ENCODE measurements at regions of chr7 and their contacts with region 1.

Region 1: DNA sequence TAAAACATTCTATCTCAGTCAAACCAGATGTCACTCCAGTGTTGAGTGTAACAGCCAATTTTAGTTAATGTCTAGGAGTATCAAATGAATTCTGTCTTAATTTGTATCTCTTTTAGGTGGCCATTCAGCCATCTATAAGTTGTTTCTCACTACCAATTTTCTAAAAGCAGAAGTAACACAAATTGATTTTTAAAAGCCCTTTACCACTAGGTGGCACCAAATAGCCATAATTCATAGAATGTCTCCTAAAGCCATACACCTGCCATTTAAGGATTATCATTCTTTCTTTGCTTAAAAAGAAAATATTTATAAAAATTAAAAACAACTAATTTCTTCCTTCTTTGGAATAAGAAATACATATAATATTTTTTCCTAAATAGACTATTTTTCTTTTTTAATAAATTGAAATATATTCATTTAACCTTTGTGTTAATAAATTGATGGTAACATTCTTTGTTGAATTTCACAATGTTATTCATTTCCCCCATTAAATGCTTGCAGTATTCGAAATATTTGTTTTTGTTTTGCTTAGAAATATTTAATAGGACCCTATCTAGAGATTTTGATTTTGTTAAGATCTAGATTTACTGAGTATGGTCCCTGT is 107.8 kb upstream of the PPP1R3A start:
- DNase-seq: peak; percentile 75
- ATAC-seq: no peak
- H3K4me3 ChIP-seq: no peak overlapping the region
- H3K4me3 Mint-ChIP-seq: no peak overlapping the region
- H3K27ac ChIP-seq: no peak overlapping the region
- H3K27ac Mint-ChIP-seq: no peak overlapping the region
- H3K4me1 ChIP-seq: no peaks in the 10 kb centered on the region
- H3K4me1 Mint-ChIP-seq: no peaks in the 10 kb centered on the region
- H3K27me3 ChIP-seq: no peaks in the 10 kb centered on the region
- H3K27me3 Mint-ChIP-seq: peaks cover 10% of the 10 kb centered on the region
- CTCF ChIP-seq: peak; percentile 95

Region 2: GRCh38 chr7:113460067-113460466 is 566.5 kb before region 1 on chr7:
- CTCF ChIA-PET with region 1: no interaction called
- POLR2A ChIA-PET with region 1: no interaction called
- intact Hi-C with region 1: no loop called
- DNase-seq: no peak
- ATAC-seq: no peak
- H3K4me3 ChIP-seq: no peak overlapping the region
- H3K4me3 Mint-ChIP-seq: no peak overlapping the region
- H3K27ac ChIP-seq: no peak overlapping the region
- H3K27ac Mint-ChIP-seq: no peak overlapping the region
- H3K4me1 ChIP-seq: no peaks in the 10 kb centered on the region
- H3K4me1 Mint-ChIP-seq: no peaks in the 10 kb centered on the region
- H3K27me3 ChIP-seq: no peaks in the 10 kb centered on the region
- H3K27me3 Mint-ChIP-seq: no peaks in the 10 kb centered on the region
- CTCF ChIP-seq: no peak

Region 3: DNA sequence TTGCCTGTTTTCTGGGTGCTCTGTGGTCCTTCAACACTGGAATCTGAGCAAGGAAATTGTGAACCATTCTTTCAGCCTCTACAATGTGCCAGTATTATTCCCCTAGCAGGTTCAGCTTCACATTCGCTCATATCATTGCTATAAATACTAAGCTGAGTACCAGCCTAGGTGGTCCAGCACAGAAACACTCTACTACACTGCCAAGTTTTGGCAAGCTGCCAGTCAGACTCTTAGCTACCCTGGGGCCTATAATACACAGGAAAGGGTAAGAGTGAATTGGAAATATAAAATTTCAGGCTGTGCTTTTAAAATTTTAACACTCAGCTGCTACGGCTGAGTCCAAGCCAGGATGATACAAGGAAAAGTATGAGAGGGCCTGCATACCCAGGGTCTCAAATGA is 57.9 kb before region 1 on chr7:
- CTCF ChIA-PET with region 1: no interaction called
- POLR2A ChIA-PET with region 1: no interaction called
- intact Hi-C with region 1: no loop called
- DNase-seq: no peak
- ATAC-seq: no peak
- H3K4me3 ChIP-seq: no peak overlapping the region
- H3K4me3 Mint-ChIP-seq: no peak overlapping the region
- H3K27ac ChIP-seq: no peak overlapping the region
- H3K27ac Mint-ChIP-seq: no peak overlapping the region
- H3K4me1 ChIP-seq: no peaks in the 10 kb centered on the region
- H3K4me1 Mint-ChIP-seq: no peaks in the 10 kb centered on the region
- H3K27me3 ChIP-seq: no peaks in the 10 kb centered on the region
- H3K27me3 Mint-ChIP-seq: no peaks in the 10 kb centered on the region
- CTCF ChIP-seq: no peak

Region 4: DNA sequence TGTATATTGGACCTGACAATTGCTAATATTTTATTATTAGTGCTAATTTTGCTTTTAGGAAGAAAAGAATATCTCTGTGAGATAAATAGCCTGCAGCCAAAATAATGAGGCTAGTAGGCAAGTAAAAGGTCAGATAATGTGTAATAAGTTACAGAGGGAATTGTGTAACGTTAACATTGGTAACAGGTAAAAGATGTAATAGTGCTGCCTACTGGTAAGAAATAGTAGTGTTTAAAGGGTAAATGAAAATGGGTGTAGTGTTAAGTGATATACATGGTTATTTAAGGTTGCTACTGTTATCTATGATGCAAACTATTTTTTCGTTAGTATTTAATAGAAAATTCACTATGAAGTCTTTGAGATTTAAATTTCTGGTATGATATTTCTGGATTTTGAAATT is 378.8 kb after region 1 on chr7:
- CTCF ChIA-PET with region 1: no interaction called
- POLR2A ChIA-PET with region 1: no interaction called
- intact Hi-C with region 1: loop called (anchors 10 kb)
- DNase-seq: no peak
- ATAC-seq: no peak
- H3K4me3 ChIP-seq: no peak overlapping the region
- H3K4me3 Mint-ChIP-seq: no peak overlapping the region
- H3K27ac ChIP-seq: no peak overlapping the region
- H3K27ac Mint-ChIP-seq: no peak overlapping the region
- H3K4me1 ChIP-seq: no peaks in the 10 kb centered on the region
- H3K4me1 Mint-ChIP-seq: no peaks in the 10 kb centered on the region
- H3K27me3 ChIP-seq: no peaks in the 10 kb centered on the region
- H3K27me3 Mint-ChIP-seq: no peaks in the 10 kb centered on the region
- CTCF ChIP-seq: no peak

Region 5: DNA sequence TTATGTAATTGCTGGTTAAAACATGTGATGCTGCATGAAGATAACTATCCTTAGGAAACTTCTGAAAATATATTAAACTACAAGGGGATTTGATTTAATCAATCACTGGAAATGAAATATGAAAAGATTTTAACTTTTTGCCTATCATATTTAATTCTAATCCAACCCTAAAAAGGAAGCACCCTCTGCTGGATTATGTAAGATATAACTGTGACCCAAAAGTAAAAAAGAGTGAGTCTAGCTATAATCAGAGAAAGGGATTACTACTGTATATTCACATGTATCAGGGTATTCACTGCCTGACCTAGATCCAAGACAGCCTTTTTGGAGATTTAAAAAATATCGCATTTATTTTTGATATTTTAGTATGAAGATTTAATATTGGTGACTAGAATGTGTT is 1190.8 kb after region 1 on chr7:
- CTCF ChIA-PET with region 1: no interaction called
- POLR2A ChIA-PET with region 1: no interaction called
- intact Hi-C with region 1: loop called (anchors 2 kb)
- DNase-seq: no peak
- ATAC-seq: no peak
- H3K4me3 ChIP-seq: no peak overlapping the region
- H3K4me3 Mint-ChIP-seq: no peak overlapping the region
- H3K27ac ChIP-seq: no peak overlapping the region
- H3K27ac Mint-ChIP-seq: no peak overlapping the region
- H3K4me1 ChIP-seq: no peaks in the 10 kb centered on the region
- H3K4me1 Mint-ChIP-seq: no peaks in the 10 kb centered on the region
- H3K27me3 ChIP-seq: no peaks in the 10 kb centered on the region
- H3K27me3 Mint-ChIP-seq: peaks cover 3% of the 10 kb centered on the region
- CTCF ChIP-seq: no peak

Region 6: DNA sequence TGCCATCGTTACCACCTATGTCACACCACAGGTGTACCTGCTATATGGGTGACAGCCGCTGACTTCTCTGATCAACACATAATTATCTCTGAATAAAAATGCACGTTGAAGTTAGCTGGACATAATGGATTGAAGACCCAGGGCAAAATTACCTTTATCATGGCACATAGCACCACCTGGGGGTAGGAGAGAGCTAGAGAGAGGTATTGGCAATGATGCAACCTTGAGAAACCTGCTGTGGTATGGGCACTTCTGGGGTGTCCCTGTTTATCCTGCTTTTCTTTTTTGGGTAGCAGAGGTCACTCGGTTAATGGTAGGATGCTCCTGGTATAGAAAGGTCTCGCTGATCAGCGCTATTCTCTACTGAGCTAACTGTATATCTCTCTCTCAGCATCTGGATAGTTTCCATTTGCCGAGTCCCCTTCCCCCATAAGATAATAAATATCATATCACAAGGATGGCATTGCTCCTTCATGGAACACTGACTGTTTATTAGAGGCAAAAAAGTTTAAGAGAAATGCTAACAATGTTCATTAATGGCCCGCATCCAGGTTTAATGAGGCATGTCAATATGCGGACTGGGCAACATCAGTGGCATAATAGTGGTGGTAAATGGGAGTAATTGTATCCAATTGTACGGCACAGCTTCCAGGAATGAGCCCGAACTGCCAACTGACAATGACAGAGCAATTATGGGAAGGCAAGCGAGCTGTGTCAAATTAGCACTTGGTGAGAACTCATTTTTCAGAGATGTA is 1680.8 kb after region 1 on chr7:
- CTCF ChIA-PET with region 1: no interaction called
- POLR2A ChIA-PET with region 1: no interaction called
- intact Hi-C with region 1: loop called (anchors 2 kb)
- DNase-seq: peak; percentile 6
- ATAC-seq: no peak
- H3K4me3 ChIP-seq: no peak overlapping the region
- H3K4me3 Mint-ChIP-seq: no peak overlapping the region
- H3K27ac ChIP-seq: no peak overlapping the region
- H3K27ac Mint-ChIP-seq: no peak overlapping the region
- H3K4me1 ChIP-seq: no peaks in the 10 kb centered on the region
- H3K4me1 Mint-ChIP-seq: no peaks in the 10 kb centered on the region
- H3K27me3 ChIP-seq: no peaks in the 10 kb centered on the region
- H3K27me3 Mint-ChIP-seq: no peaks in the 10 kb centered on the region
- CTCF ChIP-seq: no peak

Region 7: DNA sequence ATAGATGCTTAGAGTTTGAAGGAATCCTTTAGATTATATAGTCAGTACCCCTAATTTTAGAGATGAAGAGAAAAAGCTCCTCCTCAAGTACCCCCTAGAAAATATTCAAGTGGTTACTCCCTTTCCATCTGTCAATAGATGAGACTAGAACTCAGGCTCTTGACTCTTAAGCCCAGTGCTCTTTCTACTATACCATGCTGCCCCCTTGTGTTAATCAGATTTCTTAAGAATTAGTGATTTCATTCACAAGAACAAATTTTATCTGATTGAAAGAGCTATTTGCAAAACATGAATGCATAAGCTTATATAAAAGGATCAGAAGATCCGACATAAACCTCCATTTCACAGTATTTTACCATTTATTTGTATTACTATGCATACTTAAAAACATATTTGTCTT is 1824.7 kb after region 1 on chr7:
- CTCF ChIA-PET with region 1: interaction called, 9 read pairs
- POLR2A ChIA-PET with region 1: no interaction called
- intact Hi-C with region 1: loop called (anchors 1 kb)
- DNase-seq: peak; percentile 27
- ATAC-seq: no peak
- H3K4me3 ChIP-seq: no peak overlapping the region
- H3K4me3 Mint-ChIP-seq: no peak overlapping the region
- H3K27ac ChIP-seq: no peak overlapping the region
- H3K27ac Mint-ChIP-seq: no peak overlapping the region
- H3K4me1 ChIP-seq: no peaks in the 10 kb centered on the region
- H3K4me1 Mint-ChIP-seq: no peaks in the 10 kb centered on the region
- H3K27me3 ChIP-seq: no peaks in the 10 kb centered on the region
- H3K27me3 Mint-ChIP-seq: peaks cover 13% of the 10 kb centered on the region
- CTCF ChIP-seq: peak; percentile 31

Region 8: GRCh38 chr7:115910541-115911164 is 1884.1 kb after region 1 on chr7:
- CTCF ChIA-PET with region 1: interaction called, 5 read pairs
- POLR2A ChIA-PET with region 1: no interaction called
- intact Hi-C with region 1: loop called (anchors 2 kb)
- DNase-seq: peak; percentile 36
- ATAC-seq: no peak
- H3K4me3 ChIP-seq: no peak overlapping the region
- H3K4me3 Mint-ChIP-seq: no peak overlapping the region
- H3K27ac ChIP-seq: no peak overlapping the region
- H3K27ac Mint-ChIP-seq: no peak overlapping the region
- H3K4me1 ChIP-seq: peaks cover 0 to 3% of the 10 kb centered on the region in 2 donors
- H3K4me1 Mint-ChIP-seq: no peaks in the 10 kb centered on the region
- H3K27me3 ChIP-seq: no peaks in the 10 kb centered on the region
- H3K27me3 Mint-ChIP-seq: peaks cover 11% of the 10 kb centered on the region
- CTCF ChIP-seq: peak; percentile 60

Measured in B cell (primary cell).